ENCODE measurements at regions of chr9 and their contacts with region 1.

Region 1: DNA sequence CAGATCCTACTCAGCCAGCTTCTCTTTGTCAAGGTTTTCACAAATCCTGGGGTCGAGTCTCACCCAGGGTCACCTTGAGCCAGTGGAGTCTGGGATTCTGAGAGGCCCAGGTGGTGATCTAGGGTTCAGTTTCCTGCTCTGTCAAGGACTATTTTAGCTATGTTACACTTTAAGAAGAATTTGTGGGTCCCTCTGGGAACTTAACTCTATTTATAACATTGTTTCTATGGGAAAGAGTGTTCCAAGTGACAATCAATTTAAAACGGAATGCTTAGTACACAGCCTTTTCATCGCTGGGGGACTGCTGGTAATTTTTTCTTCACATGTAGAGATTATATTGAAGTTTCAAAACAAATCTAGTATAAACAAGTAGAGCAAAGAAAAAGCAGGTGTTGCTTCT is 26.9 kb upstream of the TMEM252 start:
- DNase-seq: no peak
- ATAC-seq: no peak
- H3K4me3 ChIP-seq: no peak overlapping the region
- H3K4me3 Mint-ChIP-seq: no peak overlapping the region
- H3K27ac ChIP-seq: no peak overlapping the region
- H3K27ac Mint-ChIP-seq: no peak overlapping the region
- H3K4me1 ChIP-seq: no peaks in the 10 kb centered on the region
- H3K4me1 Mint-ChIP-seq: peaks cover 4% of the 10 kb centered on the region
- H3K27me3 ChIP-seq: peaks cover 0 to 3% (median 0%) of the 10 kb centered on the region in 4 experiments
- H3K27me3 Mint-ChIP-seq: peaks cover 12% of the 10 kb centered on the region
- CTCF ChIP-seq: no peak

Region 2: GRCh38 chr9:68515326-68515901 is 52.2 kb before region 1 on chr9:
- CTCF ChIA-PET with region 1: no interaction called
- POLR2A ChIA-PET with region 1: no interaction called
- intact Hi-C with region 1: no loop called
- DNase-seq: no peak
- ATAC-seq: no peak
- H3K4me3 ChIP-seq: no peak overlapping the region
- H3K4me3 Mint-ChIP-seq: no peak overlapping the region
- H3K27ac ChIP-seq: no peak overlapping the region
- H3K27ac Mint-ChIP-seq: no peak overlapping the region
- H3K4me1 ChIP-seq: no peaks in the 10 kb centered on the region
- H3K4me1 Mint-ChIP-seq: no peaks in the 10 kb centered on the region
- H3K27me3 ChIP-seq: peaks cover 0 to 3% (median 0%) of the 10 kb centered on the region in 4 experiments
- H3K27me3 Mint-ChIP-seq: peaks cover 11% of the 10 kb centered on the region
- CTCF ChIP-seq: no peak

Region 3: GRCh38 chr9:68999393-69000105 is 432.0 kb after region 1 on chr9:
- CTCF ChIA-PET with region 1: interaction called, 11 read pairs
- POLR2A ChIA-PET with region 1: no interaction called
- intact Hi-C with region 1: no loop called
- DNase-seq: peak; percentile 74
- ATAC-seq: peak; percentile 92
- H3K4me3 ChIP-seq: no peak overlapping the region
- H3K4me3 Mint-ChIP-seq: no peak overlapping the region
- H3K27ac ChIP-seq: no peak overlapping the region
- H3K27ac Mint-ChIP-seq: peak overlapping the region; percentile 16
- H3K4me1 ChIP-seq: peaks cover 0 to 7% of the 10 kb centered on the region in 2 donors
- H3K4me1 Mint-ChIP-seq: peaks cover 21% of the 10 kb centered on the region
- H3K27me3 ChIP-seq: no peaks in the 10 kb centered on the region
- H3K27me3 Mint-ChIP-seq: no peaks in the 10 kb centered on the region
- CTCF ChIP-seq: peak; percentile 82

Measured in B cell (primary cell).